ENCODE measurements at regions of chr17 and their contacts with region 1.

Region 1: GRCh38 chr17:82716203-82717010 is at the start of gene FN3KRP:
- DNase-seq: peak; percentile 90
- H3K4me3 Mint-ChIP-seq: peak within 1 kb of the TSS; percentile 88
- H3K27ac Mint-ChIP-seq: peak within 1 kb of the TSS; percentile 77
- H3K4me1 Mint-ChIP-seq: peaks cover 13% of the 10 kb centered on the region
- H3K27me3 Mint-ChIP-seq: no peaks in the 10 kb centered on the region
- total RNA-seq, gene FN3KRP: 30.0 to 31.7 TPM

Region 2: DNA sequence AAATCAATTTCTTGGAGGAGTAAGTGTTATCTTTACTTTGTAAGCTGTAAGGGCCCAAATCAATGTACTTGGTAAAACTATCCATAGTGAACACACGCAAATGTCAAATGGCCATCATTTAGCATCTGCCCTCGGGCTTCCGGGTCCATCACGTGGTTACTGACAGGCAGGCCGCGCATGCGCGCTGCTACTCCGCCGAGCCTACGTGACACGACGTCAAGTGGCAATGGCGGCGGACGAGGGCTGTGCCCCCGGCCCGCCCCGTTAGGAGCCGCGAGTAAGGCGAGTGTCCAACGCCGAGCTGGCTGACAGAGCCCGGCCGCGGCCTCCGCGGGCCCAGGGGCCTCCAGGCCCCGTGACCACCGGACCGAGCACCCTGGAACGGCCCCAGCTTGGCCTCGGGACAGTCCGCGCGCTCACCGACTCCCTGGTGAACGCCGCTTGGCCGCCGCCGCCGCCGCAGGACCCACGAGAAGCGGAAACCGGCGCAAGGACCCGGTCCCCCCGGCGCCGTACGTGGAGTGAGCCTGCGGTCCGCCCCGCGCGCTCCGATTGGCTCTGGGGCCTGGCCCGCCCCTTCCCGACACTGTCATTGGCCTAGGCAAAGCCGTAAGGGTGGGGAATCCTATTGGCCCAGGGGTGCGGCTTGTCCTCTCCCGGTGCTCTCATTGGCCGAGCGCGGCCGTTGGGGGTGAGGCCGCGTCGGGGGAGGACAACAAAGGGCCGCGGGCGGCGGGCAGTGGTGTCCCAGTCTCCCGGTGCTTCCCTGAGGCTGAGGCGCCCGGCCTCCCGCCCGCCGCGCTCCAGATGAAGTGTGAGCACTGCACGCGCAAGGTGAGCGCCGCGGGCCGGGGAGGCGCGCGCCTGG is 258.2 kb before region 1 on chr17 and contains the start of gene NARF:
- CTCF ChIA-PET with region 1: no interaction called
- intact Hi-C with region 1: loop called (anchors 1 kb)
- DNase-seq: peak; percentile 97
- H3K4me3 Mint-ChIP-seq: peak within 1 kb of the TSS; percentile 78
- H3K27ac Mint-ChIP-seq: peak within 1 kb of the TSS; percentile 97
- H3K4me1 Mint-ChIP-seq: peaks cover 27% of the 10 kb centered on the region
- H3K27me3 Mint-ChIP-seq: no peaks in the 10 kb centered on the region
- total RNA-seq, gene NARF: 64.2 to 69.3 TPM

Region 3: GRCh38 chr17:82648166-82648668 is 68.2 kb before region 1 on chr17 and contains the start of gene WDR45B:
- CTCF ChIA-PET with region 1: no interaction called
- intact Hi-C with region 1: loop called (anchors 5 kb)
- DNase-seq: peak; percentile 88
- H3K4me3 Mint-ChIP-seq: peak within 1 kb of the TSS; percentile 80
- H3K27ac Mint-ChIP-seq: no peak within 1 kb of the TSS
- H3K4me1 Mint-ChIP-seq: peaks cover 25% of the 10 kb centered on the region
- H3K27me3 Mint-ChIP-seq: no peaks in the 10 kb centered on the region
- total RNA-seq, gene WDR45B: 23.2 to 25.0 TPM

Region 4: DNA sequence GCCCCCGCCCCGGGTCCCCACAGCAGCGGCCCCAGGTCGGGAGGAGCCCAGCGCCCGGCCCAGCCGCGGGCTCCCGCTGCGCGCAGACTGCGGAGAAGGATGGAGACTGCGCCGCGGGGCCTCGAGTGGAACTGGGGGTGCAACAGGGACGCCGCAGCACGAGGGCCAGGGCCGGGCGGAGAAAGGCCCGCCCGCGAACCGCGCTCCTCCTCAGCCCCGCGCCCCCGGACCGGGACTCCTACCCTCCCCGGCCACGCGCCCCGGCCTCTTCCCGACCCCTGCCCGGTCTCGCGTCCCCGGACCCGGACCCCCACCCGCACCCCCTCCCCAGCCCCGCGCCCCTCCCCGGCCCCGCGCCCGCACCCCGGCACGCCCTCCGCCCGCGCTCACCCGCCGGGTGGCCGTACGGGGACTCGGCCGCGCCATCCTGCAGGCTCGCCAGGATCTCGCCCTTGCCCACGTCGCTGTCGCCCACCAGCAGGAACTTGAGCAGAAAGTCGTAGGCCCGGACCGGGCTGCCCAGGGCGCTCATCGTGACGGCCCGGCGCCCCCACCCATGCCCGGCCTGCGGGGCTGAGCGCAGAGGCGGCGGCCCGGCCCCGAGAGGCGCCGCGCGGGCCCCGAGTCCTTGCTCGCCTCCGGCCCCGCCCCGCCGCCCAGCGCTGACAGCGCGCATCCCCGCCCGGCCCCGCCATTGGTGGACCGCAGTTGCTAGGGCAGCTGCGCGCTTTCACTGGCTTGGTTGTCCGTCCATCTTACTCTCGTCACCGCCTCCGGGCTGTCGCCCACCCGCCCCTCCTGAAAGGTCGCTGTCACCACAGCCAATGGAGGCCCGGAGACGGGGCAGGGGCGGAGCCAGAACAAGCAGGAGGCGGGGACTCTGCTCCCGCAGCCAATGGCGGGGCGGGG is 18.1 kb before region 1 on chr17 and contains the start of gene RAB40B:
- CTCF ChIA-PET with region 1: interaction called, 3 read pairs
- intact Hi-C with region 1: loop called (anchors 1 kb)
- DNase-seq: peak; percentile 96
- H3K4me3 Mint-ChIP-seq: peak within 1 kb of the TSS; percentile 75
- H3K27ac Mint-ChIP-seq: no peak within 1 kb of the TSS
- H3K4me1 Mint-ChIP-seq: peaks cover 9% of the 10 kb centered on the region
- H3K27me3 Mint-ChIP-seq: peaks cover 5% of the 10 kb centered on the region
- total RNA-seq, gene RAB40B: 0.42 to 0.52 TPM

Region 5: GRCh38 chr17:82734987-82735866 is 18.8 kb after region 1 on chr17 and contains the start of gene FN3K:
- CTCF ChIA-PET with region 1: no interaction called
- intact Hi-C with region 1: no loop called
- DNase-seq: no peak
- H3K4me3 Mint-ChIP-seq: peak within 1 kb of the TSS; percentile 42
- H3K27ac Mint-ChIP-seq: no peak within 1 kb of the TSS
- H3K4me1 Mint-ChIP-seq: peaks cover 5% of the 10 kb centered on the region
- H3K27me3 Mint-ChIP-seq: no peaks in the 10 kb centered on the region
- total RNA-seq, gene FN3K: 1.3 to 1.8 TPM

Region 6: GRCh38 chr17:82751571-82752370 is 35.4 kb after region 1 on chr17 and contains the start of gene TBCD:
- CTCF ChIA-PET with region 1: no interaction called
- intact Hi-C with region 1: loop called (anchors 1 kb)
- DNase-seq: peak; percentile 90
- H3K4me3 Mint-ChIP-seq: peak within 1 kb of the TSS; percentile 79
- H3K27ac Mint-ChIP-seq: peak within 1 kb of the TSS; percentile 18
- H3K4me1 Mint-ChIP-seq: peaks cover 26% of the 10 kb centered on the region
- H3K27me3 Mint-ChIP-seq: no peaks in the 10 kb centered on the region
- total RNA-seq, gene TBCD: 71.8 to 75.3 TPM

Region 7: DNA sequence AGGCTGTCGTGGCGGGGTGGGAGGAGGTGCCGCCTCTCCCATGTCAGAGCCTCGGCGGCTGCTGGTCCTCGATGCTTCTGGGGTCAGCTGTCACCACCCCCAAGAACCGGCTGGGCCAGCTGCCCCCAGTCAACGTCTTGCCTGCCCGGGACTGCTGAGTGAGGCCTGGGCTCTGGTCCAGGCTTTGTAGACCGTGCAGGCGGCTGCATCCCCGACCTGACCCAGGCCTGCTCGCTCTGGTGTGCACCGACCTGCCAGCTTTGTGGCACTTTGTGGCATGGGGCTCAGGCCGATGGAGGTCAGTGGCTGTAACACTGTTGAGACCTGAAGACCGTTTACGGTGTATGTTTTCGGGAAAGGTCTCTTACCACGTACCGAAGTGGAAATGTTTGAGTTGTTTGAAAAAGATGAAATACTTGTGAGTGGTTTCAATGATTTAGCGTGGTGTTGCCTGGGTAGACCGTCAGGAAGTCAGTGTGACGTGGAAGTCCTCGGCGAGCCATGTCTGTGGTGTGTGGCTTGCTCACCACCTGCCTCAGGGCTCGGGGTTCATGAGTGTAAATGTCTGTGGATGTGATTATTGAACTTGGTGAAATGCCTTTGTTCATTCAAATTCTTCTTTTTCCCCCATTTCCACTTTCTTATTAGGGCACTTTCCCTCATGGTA is 176.6 kb after region 1 on chr17:
- CTCF ChIA-PET with region 1: no interaction called
- intact Hi-C with region 1: no loop called
- DNase-seq: peak; percentile 77
- H3K4me3 Mint-ChIP-seq: peak overlapping the region; percentile 67
- H3K27ac Mint-ChIP-seq: peak overlapping the region; percentile 83
- H3K4me1 Mint-ChIP-seq: peaks cover 39% of the 10 kb centered on the region
- H3K27me3 Mint-ChIP-seq: no peaks in the 10 kb centered on the region

Measured in activated naive CD4-positive, alpha-beta T cell treated with anti-CD3 and anti-CD28 coated beads for 36 hours (primary cell).